Mammary epithelial cell (primary cell): ENCODE measurements at regions of chr11 and their contacts with region 1.

Region 1: GRCh38 chr11:92765965-92766371 is 203.5 kb upstream of the MTNR1B start:
- DNase-seq: no peak
- H3K4me3 ChIP-seq: peak overlapping the region in 1 of 3 experiments; percentile 19
- H3K27ac ChIP-seq: no peak overlapping the region
- H3K4me1 ChIP-seq: no peaks in the 10 kb centered on the region
- H3K27me3 ChIP-seq: peaks cover 2% of the 10 kb centered on the region
- CTCF ChIP-seq: no peak

Region 2: DNA sequence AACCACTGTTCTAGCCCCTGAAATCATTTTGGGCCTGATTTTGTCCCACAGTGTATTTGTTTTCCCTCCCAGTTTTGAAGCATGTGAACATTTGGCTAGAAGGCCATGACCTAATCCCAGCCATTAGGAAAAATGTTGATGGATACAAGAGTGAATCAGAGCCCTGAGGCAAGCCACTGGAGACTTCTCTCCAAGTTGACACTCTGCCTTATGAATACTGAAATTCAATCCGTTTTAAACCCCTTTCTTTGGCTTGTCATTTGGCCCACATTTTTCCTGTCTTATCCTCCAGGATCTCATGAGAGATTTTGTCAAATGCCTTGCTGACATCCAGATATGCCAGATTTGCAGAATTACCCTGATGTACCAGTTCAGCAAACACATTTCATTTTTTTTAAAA is 382.5 kb before region 1 on chr11:
- CTCF ChIA-PET with region 1: no interaction called
- dilution Hi-C with region 1: no loop called
- in situ Hi-C with region 1: no loop called
- intact Hi-C with region 1: no loop called
- DNase-seq: peak; percentile 60
- H3K4me3 ChIP-seq: no peak overlapping the region
- H3K27ac ChIP-seq: no peak overlapping the region
- H3K4me1 ChIP-seq: peaks cover 5% of the 10 kb centered on the region
- H3K27me3 ChIP-seq: no peaks in the 10 kb centered on the region
- CTCF ChIP-seq: no peak

Region 3: DNA sequence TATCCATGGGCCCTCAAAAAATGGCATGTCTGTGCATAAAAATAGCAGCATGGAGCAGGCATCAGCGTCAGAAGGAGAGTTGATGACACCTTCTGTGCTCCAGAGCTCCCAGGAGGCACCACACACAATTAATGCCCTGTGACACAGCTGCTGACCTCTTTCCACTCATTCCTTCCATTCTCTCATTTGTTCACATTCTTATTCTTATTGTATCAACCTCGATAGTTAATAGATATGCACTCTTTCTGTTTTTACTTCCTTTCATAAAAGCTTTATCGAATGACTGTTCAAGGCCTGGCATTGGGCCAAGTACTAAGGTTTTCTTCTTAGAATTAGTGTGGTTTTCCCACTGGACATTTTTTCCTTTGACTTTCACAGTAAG is 62.5 kb before region 1 on chr11:
- CTCF ChIA-PET with region 1: no interaction called
- dilution Hi-C with region 1: loop called (anchors 5 kb)
- in situ Hi-C with region 1: no loop called
- intact Hi-C with region 1: no loop called
- DNase-seq: peak; percentile 49
- H3K4me3 ChIP-seq: no peak overlapping the region
- H3K27ac ChIP-seq: peak overlapping the region; percentile 91
- H3K4me1 ChIP-seq: peaks cover 46% of the 10 kb centered on the region
- H3K27me3 ChIP-seq: no peaks in the 10 kb centered on the region
- CTCF ChIP-seq: no peak

Region 4: GRCh38 chr11:92819830-92820229 is 53.9 kb after region 1 on chr11:
- CTCF ChIA-PET with region 1: no interaction called
- dilution Hi-C with region 1: loop called (anchors 5 kb)
- in situ Hi-C with region 1: no loop called
- intact Hi-C with region 1: no loop called
- DNase-seq: no peak
- H3K4me3 ChIP-seq: no peak overlapping the region
- H3K27ac ChIP-seq: no peak overlapping the region
- H3K4me1 ChIP-seq: no peaks in the 10 kb centered on the region
- H3K27me3 ChIP-seq: peaks cover 5% of the 10 kb centered on the region
- CTCF ChIP-seq: no peak